ENCODE measurements at regions of chr17 and their contacts with region 1.

Region 1: DNA sequence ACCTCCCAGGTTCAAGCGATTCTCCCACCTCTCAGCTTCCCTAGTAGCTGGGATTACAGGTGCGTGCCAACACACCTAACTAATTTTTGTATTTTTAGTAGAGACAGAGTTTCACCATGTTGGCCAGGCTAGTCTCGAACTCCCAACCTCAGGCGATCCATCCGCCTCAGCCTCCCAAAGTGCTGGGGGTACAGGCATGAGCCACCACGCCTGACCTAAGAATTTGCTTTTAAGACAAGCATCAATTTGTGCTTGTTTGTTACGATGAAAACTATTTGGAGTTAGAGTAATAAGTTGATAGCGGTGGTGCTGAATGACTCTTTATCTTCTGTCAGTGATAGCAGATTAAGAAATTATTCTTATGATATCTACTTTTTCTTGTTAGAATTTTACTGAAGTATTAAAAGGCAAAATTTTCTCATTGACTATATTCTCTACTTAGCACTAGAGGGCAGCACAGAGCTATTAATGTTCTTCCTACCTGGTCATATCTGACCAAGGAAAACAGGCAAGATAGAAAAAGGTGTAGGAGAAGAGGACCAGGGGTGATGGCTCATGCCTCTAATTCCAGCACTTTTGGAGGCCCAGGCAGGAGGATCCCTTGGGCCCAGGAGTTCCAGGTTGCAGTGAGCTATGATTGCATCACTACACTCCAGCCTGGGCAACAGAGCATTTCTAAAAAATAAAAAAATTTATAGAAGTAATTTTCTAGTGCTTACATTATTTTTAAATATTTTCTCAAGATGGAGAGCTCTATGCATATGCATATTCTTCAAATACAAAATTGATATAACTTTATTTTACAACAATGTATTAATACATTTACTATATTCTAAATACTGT is 24.5 kb downstream of the STXBP4 start:
- DNase-seq: no peak
- ATAC-seq: peak; percentile 50
- H3K4me3 Mint-ChIP-seq: no peak overlapping the region
- H3K27ac Mint-ChIP-seq: no peak overlapping the region
- H3K4me1 Mint-ChIP-seq: no peaks in the 10 kb centered on the region
- H3K27me3 Mint-ChIP-seq: no peaks in the 10 kb centered on the region
- CTCF ChIP-seq: no peak

Region 2: GRCh38 chr17:55295411-55296170 is 302.6 kb after region 1 on chr17:
- CTCF ChIA-PET with region 1: interaction called, 58 read pairs
- POLR2A ChIA-PET with region 1: interaction called, 6 read pairs
- intact Hi-C with region 1: loop called (anchors 1 kb)
- DNase-seq: peak; percentile 31
- ATAC-seq: peak; percentile 79
- H3K4me3 Mint-ChIP-seq: no peak overlapping the region
- H3K27ac Mint-ChIP-seq: no peak overlapping the region
- H3K4me1 Mint-ChIP-seq: peaks cover 22% of the 10 kb centered on the region
- H3K27me3 Mint-ChIP-seq: peaks cover 4% of the 10 kb centered on the region
- CTCF ChIP-seq: no peak

Region 3: DNA sequence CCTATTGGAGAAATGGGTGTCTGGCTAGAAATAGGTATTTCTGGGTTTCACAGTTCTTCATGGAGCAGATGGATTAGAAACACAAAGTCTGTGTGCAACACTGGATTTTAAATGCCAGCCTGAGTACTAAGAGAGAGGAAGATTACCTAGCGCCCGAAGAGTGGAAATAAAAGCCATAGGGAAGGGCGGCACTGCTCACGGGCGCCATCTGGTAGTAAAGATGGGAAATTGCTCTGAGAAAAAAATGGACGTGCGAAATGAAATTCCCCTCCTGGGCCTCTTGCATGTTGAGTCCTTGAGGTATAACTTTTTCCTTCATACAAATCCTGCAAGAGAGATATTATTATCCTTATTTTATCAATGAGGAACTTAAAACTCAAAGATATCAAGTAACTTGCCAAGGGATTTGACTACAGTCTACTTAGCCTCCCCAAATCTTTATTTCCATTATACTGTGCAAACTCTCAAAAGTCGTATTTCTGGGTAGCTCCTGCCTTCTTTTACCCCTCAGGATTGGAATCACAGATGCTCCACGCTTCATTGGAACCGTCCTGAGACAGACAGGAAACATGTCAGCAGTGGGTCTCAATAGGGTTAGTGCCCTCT is 355.8 kb after region 1 on chr17:
- CTCF ChIA-PET with region 1: interaction called, 61 read pairs
- POLR2A ChIA-PET with region 1: interaction called, 3 read pairs
- intact Hi-C with region 1: loop called (anchors 1 kb)
- DNase-seq: no peak
- ATAC-seq: peak; percentile 37
- H3K4me3 Mint-ChIP-seq: no peak overlapping the region
- H3K27ac Mint-ChIP-seq: no peak overlapping the region
- H3K4me1 Mint-ChIP-seq: peaks cover 3% of the 10 kb centered on the region
- H3K27me3 Mint-ChIP-seq: peaks cover 5% of the 10 kb centered on the region
- CTCF ChIP-seq: peak; percentile 50

Region 4: GRCh38 chr17:55693254-55694216 is 700.5 kb after region 1 on chr17:
- CTCF ChIA-PET with region 1: no interaction called
- POLR2A ChIA-PET with region 1: no interaction called
- intact Hi-C with region 1: no loop called
- DNase-seq: no peak
- ATAC-seq: no peak
- H3K4me3 Mint-ChIP-seq: no peak overlapping the region
- H3K27ac Mint-ChIP-seq: no peak overlapping the region
- H3K4me1 Mint-ChIP-seq: no peaks in the 10 kb centered on the region
- H3K27me3 Mint-ChIP-seq: peaks cover 5% of the 10 kb centered on the region
- CTCF ChIP-seq: no peak

Measured in activated B cell treated with CpG ODN at 0.5 μM for 24 hours (primary cell).